CD4-positive, alpha-beta memory T cell (primary cell): ENCODE measurements at regions of chr6 and their contacts with region 1.

Region 1: DNA sequence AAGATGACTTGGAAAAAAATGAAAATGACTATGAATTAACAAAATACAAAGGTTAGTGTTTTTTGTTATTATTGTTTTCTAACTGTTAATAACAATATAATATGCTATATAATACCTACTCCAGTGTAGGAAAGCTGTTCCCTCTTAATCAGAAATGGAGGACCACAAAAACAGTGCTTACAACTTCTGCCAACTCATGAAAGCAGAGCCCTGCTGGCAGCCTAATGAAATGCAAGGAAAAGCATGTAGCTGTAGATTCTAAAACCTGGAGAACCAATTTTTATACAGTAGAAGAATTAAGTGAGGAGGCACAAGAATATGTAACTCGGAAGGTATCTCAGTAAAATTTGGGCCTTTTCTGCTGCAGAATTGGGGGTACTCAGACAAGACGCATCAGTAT is 29.4 kb downstream of the PHIP start:
- DNase-seq: peak in 3 of 5 donors; percentile 3 to 16 (median 11)
- H3K4me3 ChIP-seq: no peak overlapping the region
- H3K4me3 Mint-ChIP-seq: no peak overlapping the region
- H3K27ac ChIP-seq: no peak overlapping the region
- H3K27ac Mint-ChIP-seq: peak overlapping the region in 1 of 7 donors; percentile 10
- H3K4me1 ChIP-seq: peaks cover 28% of the 10 kb centered on the region
- H3K4me1 Mint-ChIP-seq: peaks cover 28 to 48% (median 43%) of the 10 kb centered on the region in 4 donors
- H3K27me3 ChIP-seq: no peaks in the 10 kb centered on the region
- H3K27me3 Mint-ChIP-seq: no peaks in the 10 kb centered on the region

Region 2: GRCh38 chr6:79064635-79065034 is 16.0 kb after region 1 on chr6:
- CTCF ChIA-PET with region 1: no interaction called
- POLR2A ChIA-PET with region 1: no interaction called
- intact Hi-C with region 1: loop called (anchors 2 kb)
- DNase-seq: no peak
- H3K4me3 ChIP-seq: no peak overlapping the region
- H3K4me3 Mint-ChIP-seq: no peak overlapping the region
- H3K27ac ChIP-seq: no peak overlapping the region
- H3K27ac Mint-ChIP-seq: no peak overlapping the region
- H3K4me1 ChIP-seq: peaks cover 19% of the 10 kb centered on the region
- H3K4me1 Mint-ChIP-seq: peaks cover 10 to 21% (median 18%) of the 10 kb centered on the region in 4 donors
- H3K27me3 ChIP-seq: no peaks in the 10 kb centered on the region
- H3K27me3 Mint-ChIP-seq: no peaks in the 10 kb centered on the region